Right cardiac atrium (tissue), 5 donors: ENCODE measurements at regions of chr2 and their contacts with region 1.

Region 1: DNA sequence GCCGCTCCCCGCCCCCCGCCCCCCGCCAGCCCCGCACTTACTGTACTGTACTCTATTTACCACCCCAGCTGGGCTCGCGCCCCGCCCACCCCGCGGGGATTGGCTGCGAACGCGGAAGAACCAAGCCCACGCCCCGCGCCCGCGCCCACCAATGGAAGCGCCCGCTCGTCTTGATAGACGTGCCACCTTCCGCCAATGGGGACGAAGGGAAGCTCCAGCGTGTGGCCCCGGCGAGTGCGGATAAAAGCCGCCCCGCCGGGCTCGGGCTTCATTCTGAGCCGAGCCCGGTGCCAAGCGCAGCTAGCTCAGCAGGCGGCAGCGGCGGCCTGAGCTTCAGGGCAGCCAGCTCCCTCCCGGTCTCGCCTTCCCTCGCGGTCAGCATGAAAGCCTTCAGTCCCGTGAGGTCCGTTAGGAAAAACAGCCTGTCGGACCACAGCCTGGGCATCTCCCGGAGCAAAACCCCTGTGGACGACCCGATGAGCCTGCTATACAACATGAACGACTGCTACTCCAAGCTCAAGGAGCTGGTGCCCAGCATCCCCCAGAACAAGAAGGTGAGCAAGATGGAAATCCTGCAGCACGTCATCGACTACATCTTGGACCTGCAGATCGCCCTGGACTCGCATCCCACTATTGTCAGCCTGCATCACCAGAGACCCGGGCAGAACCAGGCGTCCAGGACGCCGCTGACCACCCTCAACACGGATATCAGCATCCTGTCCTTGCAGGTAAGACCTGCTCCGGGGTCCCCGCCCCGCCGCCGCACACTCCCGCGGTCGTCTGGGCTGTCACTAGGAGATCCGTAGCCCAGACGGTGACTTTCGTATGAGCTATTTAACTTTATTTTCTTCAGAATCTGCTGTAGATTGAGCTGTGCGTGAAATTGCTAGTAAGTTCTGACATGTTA is at the start of gene ID2:
- DNase-seq: peak; percentile 100
- ATAC-seq: peak; percentile 76 to 80
- H3K4me3 ChIP-seq: peak within 1 kb of the TSS; percentile 98
- H3K27ac ChIP-seq: peak within 1 kb of the TSS; percentile 95
- H3K4me1 ChIP-seq: no peaks in the 10 kb centered on the region
- H3K27me3 ChIP-seq: no peaks in the 10 kb centered on the region
- total RNA-seq, gene ID2: 109 to 121 (median 114) TPM

Region 2: GRCh38 chr2:7203055-7203467 is 1479.0 kb before region 1 on chr2:
- intact Hi-C with region 1: loop called in 1 of 4 experiments (anchors 10 kb)
- DNase-seq: peak in 1 of 3 donors; percentile 28
- ATAC-seq: peak; percentile 53 to 56
- H3K4me3 ChIP-seq: no peak overlapping the region
- H3K27ac ChIP-seq: no peak overlapping the region
- H3K4me1 ChIP-seq: no peaks in the 10 kb centered on the region
- H3K27me3 ChIP-seq: no peaks in the 10 kb centered on the region

Region 3: GRCh38 chr2:7427293-7428060 is 1254.6 kb before region 1 on chr2:
- intact Hi-C with region 1: loop called (anchors 5 kb)
- DNase-seq: no peak
- ATAC-seq: peak in 1 of 2 donors; percentile 43
- H3K4me3 ChIP-seq: no peak overlapping the region
- H3K27ac ChIP-seq: no peak overlapping the region
- H3K4me1 ChIP-seq: no peaks in the 10 kb centered on the region
- H3K27me3 ChIP-seq: no peaks in the 10 kb centered on the region

Region 4: GRCh38 chr2:7725171-7725849 is 956.7 kb before region 1 on chr2:
- intact Hi-C with region 1: loop called in 1 of 4 experiments (anchors 10 kb)
- DNase-seq: no peak
- ATAC-seq: peak in 1 of 2 donors; percentile 31
- H3K4me3 ChIP-seq: no peak overlapping the region
- H3K27ac ChIP-seq: no peak overlapping the region
- H3K4me1 ChIP-seq: no peaks in the 10 kb centered on the region
- H3K27me3 ChIP-seq: no peaks in the 10 kb centered on the region

Region 5: DNA sequence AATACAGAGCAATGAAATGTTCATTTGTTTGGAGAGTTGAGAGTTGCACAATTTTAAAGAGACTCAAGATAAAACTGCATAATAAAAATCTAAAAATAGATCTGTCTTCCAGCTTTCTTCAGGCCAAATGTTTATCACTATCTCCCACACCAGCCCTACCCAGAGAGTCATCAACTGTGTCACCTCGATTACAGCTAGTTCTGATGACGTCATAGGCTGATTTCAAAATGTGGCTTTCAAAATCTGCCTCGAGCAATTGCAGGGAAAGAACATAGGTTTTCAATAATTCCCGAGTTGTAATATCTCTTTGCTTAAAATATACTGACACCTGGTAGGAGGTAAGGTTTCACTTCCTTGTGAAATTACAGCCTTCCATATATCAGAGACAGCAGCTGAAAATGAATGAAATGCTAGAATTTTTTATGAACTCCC is 677.8 kb before region 1 on chr2:
- intact Hi-C with region 1: loop called in 1 of 4 experiments (anchors 10 kb)
- DNase-seq: no peak
- ATAC-seq: peak; percentile 83 to 86
- H3K4me3 ChIP-seq: no peak overlapping the region
- H3K27ac ChIP-seq: peak overlapping the region; percentile 61
- H3K4me1 ChIP-seq: peaks cover 1% of the 10 kb centered on the region
- H3K27me3 ChIP-seq: no peaks in the 10 kb centered on the region

Region 6: GRCh38 chr2:8525582-8526402 is 156.2 kb before region 1 on chr2:
- intact Hi-C with region 1: loop called in 2 of 4 experiments (anchors 5 to 10 kb)
- DNase-seq: peak; percentile 83 to 93 (median 93)
- ATAC-seq: peak; percentile 79 to 83
- H3K4me3 ChIP-seq: no peak overlapping the region
- H3K27ac ChIP-seq: no peak overlapping the region
- H3K4me1 ChIP-seq: no peaks in the 10 kb centered on the region
- H3K27me3 ChIP-seq: no peaks in the 10 kb centered on the region

Region 7: DNA sequence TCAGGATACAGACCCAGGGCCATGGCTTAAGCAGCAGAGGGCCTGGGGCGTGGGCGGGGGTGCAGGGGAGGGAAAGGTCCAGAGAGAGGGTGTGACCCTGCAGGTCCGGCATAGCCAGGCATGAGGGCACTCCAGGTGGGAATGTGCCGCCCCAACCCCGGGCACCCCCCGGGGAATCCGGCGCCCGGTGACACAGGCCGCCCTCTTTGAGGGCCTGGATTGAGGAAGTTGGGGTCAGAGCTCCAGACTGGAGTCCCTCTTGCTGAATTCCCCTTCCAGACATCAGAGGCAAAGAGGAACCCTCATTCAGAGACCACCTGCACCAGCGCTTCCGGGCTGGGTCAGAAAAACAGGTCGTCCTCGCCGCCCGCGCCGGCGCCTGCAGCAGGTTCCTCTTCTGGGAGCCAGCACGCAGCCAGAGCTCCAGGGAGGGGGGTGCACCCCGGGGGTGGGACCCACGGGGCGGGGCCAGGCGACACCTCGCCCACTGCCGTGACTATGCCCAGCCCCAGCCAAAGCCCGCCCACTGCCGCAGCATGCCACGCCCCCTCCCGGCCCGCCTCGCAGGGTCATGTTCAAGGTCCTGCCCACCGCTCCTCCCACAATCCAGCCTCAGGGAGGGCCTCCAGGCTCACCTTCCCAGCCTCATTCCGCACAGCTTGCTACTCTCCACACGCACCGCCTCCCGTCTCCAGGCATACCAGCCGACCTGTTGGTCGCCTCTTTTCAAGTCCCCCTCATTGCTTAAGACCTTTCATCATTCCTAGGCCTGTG is 98.5 kb before region 1 on chr2:
- intact Hi-C with region 1: loop called in 1 of 4 experiments (anchors 5 kb)
- DNase-seq: peak; percentile 92 to 98 (median 97)
- ATAC-seq: peak; percentile 94 to 95
- H3K4me3 ChIP-seq: no peak overlapping the region
- H3K27ac ChIP-seq: peak overlapping the region; percentile 48
- H3K4me1 ChIP-seq: peaks cover 12% of the 10 kb centered on the region
- H3K27me3 ChIP-seq: no peaks in the 10 kb centered on the region